ENCODE measurements at regions of chr10 and their contacts with region 1.

Region 1: DNA sequence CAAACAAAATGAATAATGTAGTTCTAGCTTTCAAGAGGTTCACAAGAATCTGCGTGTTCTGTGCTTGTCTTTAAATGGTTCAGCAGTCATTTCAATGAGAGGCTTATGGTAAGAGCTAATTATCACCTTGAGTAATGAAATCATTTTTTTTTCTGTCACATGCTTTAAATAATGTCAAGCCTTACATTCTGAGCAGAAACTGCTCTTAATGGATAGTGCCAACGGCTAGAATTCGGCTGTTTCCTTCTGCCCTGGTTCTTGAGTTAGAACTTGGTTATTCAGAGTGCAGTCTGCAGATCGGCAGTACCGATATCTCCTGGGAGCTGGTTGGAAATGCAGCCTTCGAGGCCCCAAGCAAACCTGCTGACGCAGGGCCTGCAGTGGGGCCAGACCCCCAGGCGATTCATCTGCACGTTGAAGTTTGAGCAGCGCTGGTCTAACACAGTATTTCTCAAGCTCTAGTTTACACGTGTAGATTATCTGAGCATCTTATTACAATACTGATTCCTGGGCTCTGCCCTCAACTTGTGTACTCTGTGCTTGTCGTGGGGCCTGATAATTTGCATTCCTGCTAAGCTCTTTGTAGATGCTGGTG is 316.3 kb downstream of the CAMK1D start:
- DNase-seq: no peak

Region 2: GRCh38 chr10:12588120-12588860 is 77.3 kb before region 1 on chr10:
- CTCF ChIA-PET with region 1: interaction called, 10 read pairs
- POLR2A ChIA-PET with region 1: no interaction called
- DNase-seq: no peak

Measured in HEK293T (cell line).